Activated naive CD4-positive, alpha-beta T cell treated with anti-CD3 and anti-CD28 coated beads for 36 hours (primary cell): ENCODE measurements at regions of chr6 and their contacts with region 1.

Region 1: GRCh38 chr6:135535989-135536414 is 38.5 kb upstream of the AHI1 start:
- DNase-seq: no peak
- H3K4me3 Mint-ChIP-seq: no peak overlapping the region
- H3K27ac Mint-ChIP-seq: no peak overlapping the region
- H3K4me1 Mint-ChIP-seq: peaks cover 13% of the 10 kb centered on the region
- H3K27me3 Mint-ChIP-seq: no peaks in the 10 kb centered on the region

Region 2: GRCh38 chr6:135451693-135452092 is 84.3 kb before region 1 on chr6:
- CTCF ChIA-PET with region 1: interaction called, 6 read pairs
- intact Hi-C with region 1: loop called (anchors 1 kb)
- DNase-seq: no peak
- H3K4me3 Mint-ChIP-seq: no peak overlapping the region
- H3K27ac Mint-ChIP-seq: no peak overlapping the region
- H3K4me1 Mint-ChIP-seq: no peaks in the 10 kb centered on the region
- H3K27me3 Mint-ChIP-seq: no peaks in the 10 kb centered on the region

Region 3: DNA sequence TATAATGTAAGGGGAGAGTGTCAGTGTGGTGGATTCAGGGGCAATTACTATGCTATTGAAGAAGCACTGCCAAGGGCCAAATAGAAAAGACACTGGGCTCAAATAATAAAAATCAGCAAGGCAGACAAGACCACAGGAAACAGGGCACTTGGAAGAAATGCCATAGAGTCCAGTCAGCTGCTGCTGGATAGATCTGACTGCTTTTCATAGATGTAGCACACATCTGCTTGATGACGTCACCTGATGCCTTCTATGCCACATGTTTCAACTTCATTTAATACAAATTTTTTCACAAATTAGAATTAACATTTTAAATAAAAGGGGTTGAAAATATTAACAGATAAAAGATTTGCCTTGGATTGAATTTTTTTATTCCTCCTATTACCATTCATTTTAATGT is 14.6 kb before region 1 on chr6:
- CTCF ChIA-PET with region 1: no interaction called
- intact Hi-C with region 1: no loop called
- DNase-seq: no peak
- H3K4me3 Mint-ChIP-seq: no peak overlapping the region
- H3K27ac Mint-ChIP-seq: no peak overlapping the region
- H3K4me1 Mint-ChIP-seq: no peaks in the 10 kb centered on the region
- H3K27me3 Mint-ChIP-seq: no peaks in the 10 kb centered on the region

Region 4: GRCh38 chr6:135586841-135587240 is 50.8 kb after region 1 on chr6:
- CTCF ChIA-PET with region 1: no interaction called
- intact Hi-C with region 1: no loop called
- DNase-seq: peak; percentile 46
- H3K4me3 Mint-ChIP-seq: no peak overlapping the region
- H3K27ac Mint-ChIP-seq: no peak overlapping the region
- H3K4me1 Mint-ChIP-seq: peaks cover 16% of the 10 kb centered on the region
- H3K27me3 Mint-ChIP-seq: no peaks in the 10 kb centered on the region

Region 5: GRCh38 chr6:135600086-135600702 is 64.2 kb after region 1 on chr6:
- CTCF ChIA-PET with region 1: no interaction called
- intact Hi-C with region 1: no loop called
- DNase-seq: no peak
- H3K4me3 Mint-ChIP-seq: no peak overlapping the region
- H3K27ac Mint-ChIP-seq: no peak overlapping the region
- H3K4me1 Mint-ChIP-seq: peaks cover 7% of the 10 kb centered on the region
- H3K27me3 Mint-ChIP-seq: no peaks in the 10 kb centered on the region

Region 6: GRCh38 chr6:135624402-135625295 is 88.6 kb after region 1 on chr6:
- CTCF ChIA-PET with region 1: interaction called, 3 read pairs
- intact Hi-C with region 1: loop called (anchors 2 kb)
- DNase-seq: peak; percentile 46
- H3K4me3 Mint-ChIP-seq: no peak overlapping the region
- H3K27ac Mint-ChIP-seq: peak overlapping the region; percentile 84
- H3K4me1 Mint-ChIP-seq: peaks cover 19% of the 10 kb centered on the region
- H3K27me3 Mint-ChIP-seq: no peaks in the 10 kb centered on the region

Region 7: GRCh38 chr6:135759831-135760230 is 223.8 kb after region 1 on chr6:
- CTCF ChIA-PET with region 1: no interaction called
- intact Hi-C with region 1: loop called (anchors 5 kb)
- DNase-seq: no peak
- H3K4me3 Mint-ChIP-seq: no peak overlapping the region
- H3K27ac Mint-ChIP-seq: no peak overlapping the region
- H3K4me1 Mint-ChIP-seq: peaks cover 5% of the 10 kb centered on the region
- H3K27me3 Mint-ChIP-seq: no peaks in the 10 kb centered on the region

Region 8: GRCh38 chr6:136031982-136032381 is 496.0 kb after region 1 on chr6:
- CTCF ChIA-PET with region 1: no interaction called
- intact Hi-C with region 1: loop called (anchors 10 kb)
- DNase-seq: peak; percentile 26
- H3K4me3 Mint-ChIP-seq: no peak overlapping the region
- H3K27ac Mint-ChIP-seq: no peak overlapping the region
- H3K4me1 Mint-ChIP-seq: no peaks in the 10 kb centered on the region
- H3K27me3 Mint-ChIP-seq: no peaks in the 10 kb centered on the region

Region 9: DNA sequence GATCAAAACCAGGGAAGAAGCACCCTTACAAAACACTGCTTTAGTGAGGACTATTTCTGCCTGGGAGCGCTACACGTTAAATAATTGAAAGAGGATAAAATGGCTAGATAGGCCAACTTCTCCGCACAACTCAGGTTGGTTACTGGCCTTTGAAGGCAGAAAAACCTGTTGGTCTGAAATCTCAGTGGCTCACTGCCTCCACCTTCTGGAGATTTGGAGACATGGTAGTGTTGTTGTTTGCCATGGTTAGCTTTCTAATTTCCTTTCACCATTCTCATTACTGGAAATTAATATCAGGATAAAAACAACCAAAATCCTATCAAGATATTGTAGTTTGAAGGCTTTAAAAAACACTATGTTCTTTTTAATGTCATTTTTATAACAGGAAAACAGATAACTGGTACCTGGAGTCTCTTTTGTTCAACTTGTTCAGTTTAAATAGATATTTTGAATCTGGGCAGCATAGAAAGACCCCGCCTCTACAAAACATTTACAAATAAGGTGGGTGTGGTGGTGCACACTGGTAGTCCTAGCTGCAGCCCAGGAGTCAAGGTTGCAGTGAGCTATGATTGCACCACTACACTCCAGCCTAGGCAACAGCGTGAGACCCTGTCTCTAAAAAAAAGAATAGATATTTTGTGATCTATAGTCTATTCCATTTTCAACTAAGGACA is 781.2 kb after region 1 on chr6:
- CTCF ChIA-PET with region 1: interaction called, 6 read pairs
- intact Hi-C with region 1: loop called (anchors 2 kb)
- DNase-seq: peak; percentile 77
- H3K4me3 Mint-ChIP-seq: no peak overlapping the region
- H3K27ac Mint-ChIP-seq: no peak overlapping the region
- H3K4me1 Mint-ChIP-seq: no peaks in the 10 kb centered on the region
- H3K27me3 Mint-ChIP-seq: no peaks in the 10 kb centered on the region